PC-9 (cell line): ENCODE measurements at regions of chr7 and their contacts with region 1.

Region 1: DNA sequence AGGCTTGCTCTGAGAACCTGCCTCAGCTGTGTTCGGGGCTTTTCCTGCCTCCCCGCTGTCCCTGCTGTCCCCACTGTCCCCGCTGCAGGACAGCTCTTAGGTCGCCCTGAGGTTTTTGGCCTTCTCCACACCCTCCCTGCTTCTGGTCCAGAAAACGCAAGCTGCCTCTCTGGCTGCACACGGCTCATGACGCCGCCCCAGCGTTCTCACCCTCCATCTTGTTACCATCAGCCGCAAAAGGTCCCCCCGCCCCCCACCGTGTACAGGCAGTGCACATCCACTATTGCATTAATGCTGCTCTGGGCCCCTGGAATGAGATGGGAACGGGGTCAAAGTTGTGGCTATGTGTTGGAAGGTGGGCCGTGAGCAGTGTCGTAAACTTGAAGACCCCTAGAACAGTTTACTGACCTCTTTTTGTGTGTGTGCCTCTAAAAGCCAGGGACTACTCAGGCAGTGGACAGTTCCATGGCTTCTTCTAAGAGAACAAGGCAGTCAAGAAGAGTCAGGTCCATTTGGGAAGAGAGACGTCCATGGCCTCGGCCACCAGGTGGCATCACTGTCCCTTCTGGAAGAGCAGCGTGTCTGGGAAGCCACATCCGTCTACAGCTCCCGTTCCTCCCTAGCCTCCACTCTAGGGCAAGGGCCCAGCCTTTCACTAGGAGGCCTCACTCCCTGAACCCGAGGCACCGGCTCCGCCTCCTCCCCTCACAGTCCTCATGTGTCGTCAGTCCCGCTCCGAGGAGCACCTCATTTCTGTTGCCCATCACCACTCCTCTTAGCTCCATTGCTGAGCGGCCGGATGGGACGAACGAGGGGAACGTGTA is 38.5 kb upstream of the MKRN1 start:
- DNase-seq: peak; percentile 78 to 92
- H3K4me3 ChIP-seq: no peak overlapping the region
- H3K27ac ChIP-seq: no peak overlapping the region
- H3K4me1 ChIP-seq: peaks cover 11% of the 10 kb centered on the region
- H3K27me3 ChIP-seq: no peaks in the 10 kb centered on the region
- CTCF ChIP-seq: peak; percentile 96

Region 2: DNA sequence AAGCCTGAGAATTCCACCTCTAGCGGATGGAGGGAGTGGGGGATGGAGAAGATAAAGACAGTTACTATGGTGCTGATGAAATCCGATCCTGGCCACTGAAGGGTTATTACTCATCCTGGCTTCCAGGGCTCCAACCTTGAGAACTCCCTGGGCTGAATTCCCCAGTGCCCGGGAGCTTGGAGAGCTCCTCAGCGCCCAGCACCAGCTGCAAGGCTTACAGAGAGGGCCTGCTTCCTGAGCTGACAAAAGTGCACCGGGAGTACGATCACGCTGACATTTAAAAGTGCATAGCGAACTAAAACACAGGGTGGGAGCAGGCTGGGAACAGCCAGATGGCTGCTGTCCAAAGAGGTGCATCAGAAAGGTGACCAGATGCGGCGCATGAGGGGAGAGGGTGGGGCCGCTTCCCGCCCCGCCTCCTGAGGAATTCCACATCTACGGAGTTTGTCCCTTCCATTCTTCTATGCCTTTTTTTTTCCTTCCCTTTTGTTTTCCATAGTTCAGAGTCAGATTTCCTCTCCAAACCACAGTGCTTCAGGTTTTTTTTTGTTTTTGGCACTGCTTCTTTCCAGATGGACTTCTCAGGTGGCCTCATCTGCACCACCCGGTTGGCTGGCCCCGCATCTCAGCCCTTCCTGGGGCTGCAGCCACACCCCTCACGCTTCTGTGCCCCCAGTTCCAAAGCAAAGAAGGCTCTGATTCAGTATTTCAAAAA is 23.9 kb after region 1 on chr7:
- CTCF ChIA-PET with region 1: no interaction called
- POLR2A ChIA-PET with region 1: no interaction called
- intact Hi-C with region 1: no loop called
- DNase-seq: peak; percentile 68 to 82
- H3K4me3 ChIP-seq: peak overlapping the region; percentile 40; the same call in 1 of the 2 replicates
- H3K27ac ChIP-seq: peak overlapping the region; percentile 54
- H3K4me1 ChIP-seq: peaks cover 19% of the 10 kb centered on the region
- H3K27me3 ChIP-seq: no peaks in the 10 kb centered on the region
- CTCF ChIP-seq: no peak

Region 3: GRCh38 chr7:140596519-140597427 is 79.0 kb after region 1 on chr7:
- CTCF ChIA-PET with region 1: interaction called, 17 read pairs
- POLR2A ChIA-PET with region 1: no interaction called
- intact Hi-C with region 1: no loop called
- DNase-seq: no peak
- H3K4me3 ChIP-seq: no peak overlapping the region
- H3K27ac ChIP-seq: no peak overlapping the region
- H3K4me1 ChIP-seq: peaks cover 14% of the 10 kb centered on the region
- H3K27me3 ChIP-seq: no peaks in the 10 kb centered on the region
- CTCF ChIP-seq: no peak

Region 4: DNA sequence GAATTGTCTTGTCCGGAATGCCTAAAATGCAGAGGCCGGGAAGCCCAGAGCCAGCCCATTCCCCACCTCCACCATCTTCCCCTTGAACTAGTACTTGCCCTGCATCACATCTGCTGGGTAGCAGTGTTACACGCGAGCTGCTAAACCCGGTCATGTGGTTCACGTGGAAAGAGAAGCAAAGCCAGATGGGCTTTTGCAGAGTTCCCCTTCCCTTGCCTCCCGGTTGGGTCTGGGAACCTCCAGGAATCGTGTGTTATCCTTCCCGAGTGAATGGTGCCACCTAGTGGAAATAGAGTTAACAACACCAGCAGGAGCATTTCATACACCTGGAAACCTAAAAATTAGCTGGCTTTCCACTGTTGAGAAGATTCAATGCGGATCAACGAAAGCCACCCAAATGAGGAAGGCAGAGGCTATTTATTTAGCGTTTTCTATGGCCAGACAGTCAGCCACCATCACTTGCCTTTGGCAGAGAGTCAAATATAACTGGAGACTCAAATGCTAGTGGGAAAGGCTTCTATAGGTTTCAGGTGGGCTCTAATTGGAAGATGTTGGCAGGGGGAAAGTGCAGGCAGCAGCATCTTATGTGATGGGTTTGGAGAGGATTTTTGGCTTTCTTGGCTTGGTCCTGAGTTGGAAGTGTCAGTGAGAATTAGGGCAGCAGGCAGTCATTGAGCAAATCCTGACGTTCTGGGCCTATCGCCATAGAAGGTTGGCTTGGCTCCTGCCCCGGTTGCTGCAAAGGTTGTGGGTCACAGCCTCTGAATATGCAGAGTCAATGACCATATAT is 135.8 kb after region 1 on chr7:
- CTCF ChIA-PET with region 1: interaction called, 18 read pairs
- POLR2A ChIA-PET with region 1: no interaction called
- intact Hi-C with region 1: loop called (anchors 1 kb)
- DNase-seq: peak; percentile 63 to 64
- H3K4me3 ChIP-seq: no peak overlapping the region
- H3K27ac ChIP-seq: no peak overlapping the region
- H3K4me1 ChIP-seq: peaks cover 55% of the 10 kb centered on the region
- H3K27me3 ChIP-seq: no peaks in the 10 kb centered on the region
- CTCF ChIP-seq: peak; percentile 95